Ascending aorta (tissue), 2 donors: ENCODE measurements at regions of chr15 and their contacts with region 1.

Region 1: GRCh38 chr15:96330450-96331145 is at the start of gene NR2F2:
- DNase-seq: peak; percentile 90 to 97
- H3K4me3 ChIP-seq: peak within 1 kb of the TSS; percentile 95
- H3K27ac ChIP-seq: peak within 1 kb of the TSS; percentile 91
- H3K4me1 ChIP-seq: peaks cover 0 to 13% of the 10 kb centered on the region in 2 donors
- H3K27me3 ChIP-seq: no peaks in the 10 kb centered on the region
- CTCF ChIP-seq: no peak
- total RNA-seq, gene NR2F2: 126 TPM

Region 2: DNA sequence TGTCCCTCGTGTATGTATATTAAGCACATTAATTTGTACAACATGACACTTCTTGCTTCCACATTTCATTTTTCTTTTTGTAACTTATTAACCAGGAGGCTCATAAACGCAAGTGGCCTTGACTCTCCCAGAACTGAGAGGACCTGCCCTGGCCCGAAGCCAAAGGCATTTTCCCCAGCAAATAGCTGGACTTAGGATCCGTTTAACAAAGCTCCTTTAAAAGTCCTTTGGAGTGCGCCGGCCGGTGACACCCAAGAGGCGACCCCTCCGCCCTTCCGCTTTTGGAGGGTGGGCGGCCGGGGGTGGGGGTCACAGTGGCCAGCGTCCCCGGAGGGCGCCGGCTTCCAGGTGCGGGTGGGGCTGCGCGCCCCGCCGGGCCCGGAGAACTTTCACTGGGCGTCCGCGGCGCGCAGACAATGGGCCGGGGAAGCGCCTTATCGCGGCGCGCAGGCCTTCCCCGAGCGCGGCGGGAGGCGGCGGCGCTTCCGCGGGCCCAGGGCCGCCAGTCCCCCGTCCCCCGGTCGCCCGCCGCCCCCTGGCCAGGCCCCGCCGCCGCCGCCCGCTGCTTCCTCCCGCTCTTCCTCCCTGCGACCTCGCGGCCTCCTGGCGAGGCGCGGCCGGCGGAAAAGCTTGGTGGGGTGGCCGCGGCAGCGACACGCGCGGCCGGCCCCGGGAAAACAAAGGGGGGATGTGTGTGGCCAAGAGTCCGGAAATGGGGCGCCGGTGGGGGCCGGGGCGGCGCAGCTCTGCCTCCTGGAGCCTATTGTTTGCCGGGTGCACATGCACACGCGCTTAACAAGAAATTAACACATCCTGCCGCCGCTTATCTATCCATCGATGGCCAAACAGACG is 1485.8 kb before region 1 on chr15:
- intact Hi-C with region 1: loop called (anchors 10 kb)
- DNase-seq: peak in 1 of 2 donors; percentile 77
- H3K4me3 ChIP-seq: peak overlapping the region; percentile 53 to 69
- H3K27ac ChIP-seq: peak overlapping the region; percentile 88 to 92
- H3K4me1 ChIP-seq: peaks cover 5 to 22% of the 10 kb centered on the region in 2 donors
- H3K27me3 ChIP-seq: no peaks in the 10 kb centered on the region
- CTCF ChIP-seq: peak in 2 of 3 experiments; percentile 15 to 37

Region 3: GRCh38 chr15:95557226-95558046 is 773.2 kb before region 1 on chr15:
- intact Hi-C with region 1: loop called (anchors 5 kb)
- DNase-seq: no peak
- H3K4me3 ChIP-seq: no peak overlapping the region
- H3K27ac ChIP-seq: peak overlapping the region; percentile 81 to 86
- H3K4me1 ChIP-seq: peaks cover 3 to 18% of the 10 kb centered on the region in 2 donors
- H3K27me3 ChIP-seq: no peaks in the 10 kb centered on the region
- CTCF ChIP-seq: no peak

Region 4: DNA sequence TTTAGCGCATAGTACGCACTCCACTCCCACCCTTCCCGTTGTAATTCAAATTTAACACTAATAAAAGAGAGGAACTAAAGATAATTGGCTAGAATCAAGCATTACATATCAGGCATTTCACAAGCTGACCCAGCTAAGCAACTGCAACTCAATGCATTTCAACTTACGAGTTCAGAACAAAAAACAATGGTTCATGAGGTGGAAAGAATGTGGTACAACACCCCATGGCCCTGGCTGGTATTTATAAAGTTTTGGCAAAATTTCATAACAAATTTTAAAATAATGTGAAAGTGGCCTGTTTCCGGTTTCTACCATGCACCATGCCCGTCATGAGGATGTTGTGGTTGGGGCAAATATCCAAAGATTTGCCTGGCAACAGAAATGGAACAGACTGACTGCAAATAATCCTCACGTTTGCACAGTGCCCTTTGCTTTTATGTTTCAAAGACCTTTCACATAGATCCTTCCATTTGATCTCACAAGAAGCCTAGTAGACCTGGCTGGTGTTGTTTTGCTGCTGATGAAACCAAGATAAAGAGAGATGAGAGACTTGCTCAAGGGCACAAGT is 455.4 kb before region 1 on chr15:
- intact Hi-C with region 1: loop called (anchors 10 kb)
- DNase-seq: peak; percentile 18 to 89
- H3K4me3 ChIP-seq: no peak overlapping the region
- H3K27ac ChIP-seq: peak overlapping the region; percentile 74 to 76
- H3K4me1 ChIP-seq: peaks cover 3 to 4% of the 10 kb centered on the region in 2 donors
- H3K27me3 ChIP-seq: no peaks in the 10 kb centered on the region
- CTCF ChIP-seq: no peak

Region 5: DNA sequence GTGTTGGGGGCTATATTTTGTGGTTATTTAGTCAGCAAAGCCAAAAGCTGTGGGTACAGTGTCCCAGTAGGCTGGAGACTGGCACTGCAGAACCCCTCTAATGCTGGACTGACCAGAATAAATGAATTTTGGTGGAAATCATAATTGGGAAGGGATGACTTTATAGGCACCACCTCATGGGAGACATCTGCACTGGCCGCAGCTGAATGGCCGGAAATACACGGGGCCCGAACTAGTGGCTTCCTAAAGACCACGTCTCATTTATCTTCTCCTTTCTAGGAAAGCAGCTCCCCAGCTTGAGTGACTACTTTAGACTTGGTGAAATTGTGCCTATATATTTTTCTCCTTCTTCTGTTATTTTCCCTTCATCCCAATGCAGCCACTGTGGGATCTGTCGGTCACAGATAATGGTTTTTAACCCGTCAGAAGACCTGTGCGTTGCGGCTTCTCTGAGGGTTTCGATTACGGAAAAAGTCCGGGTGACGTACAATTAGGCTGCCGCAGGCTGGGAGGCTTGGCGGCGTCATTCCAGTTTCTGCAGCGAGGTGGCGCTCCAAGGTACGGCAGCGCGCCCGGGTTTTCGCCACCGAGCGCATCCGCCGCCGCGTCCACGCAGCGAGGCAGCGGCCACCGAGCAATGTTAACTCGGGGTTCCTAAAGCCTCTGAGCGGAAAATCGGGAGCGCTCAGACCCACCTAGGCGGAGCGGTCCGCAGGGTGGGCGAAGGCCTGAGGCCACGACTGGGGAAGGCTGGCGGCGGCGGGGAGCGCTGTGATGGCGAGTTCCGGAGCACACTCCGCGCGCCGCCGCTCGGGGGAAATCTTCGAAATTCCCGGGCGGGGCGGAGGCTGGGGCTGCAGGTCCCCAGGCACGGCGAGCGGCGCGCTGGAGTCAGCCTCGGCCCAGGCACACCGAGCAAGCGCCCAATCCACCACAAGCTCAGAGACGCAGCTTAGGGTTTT is 26.2 kb after region 1 on chr15:
- intact Hi-C with region 1: loop called (anchors 2 kb)
- DNase-seq: peak in 1 of 2 donors; percentile 88
- H3K4me3 ChIP-seq: peak overlapping the region; percentile 58 to 78
- H3K27ac ChIP-seq: peak overlapping the region; percentile 35 to 55
- H3K4me1 ChIP-seq: peaks cover 4 to 15% of the 10 kb centered on the region in 2 donors
- H3K27me3 ChIP-seq: peaks cover 8% of the 10 kb centered on the region
- CTCF ChIP-seq: peak; percentile 94 to 99 (median 99)